Activated CD4-positive, alpha-beta memory T cell treated with anti-CD3 and anti-CD28 coated beads for 36 hours (primary cell): ENCODE measurements at regions of chr4 and their contacts with region 1.

Region 1: GRCh38 chr4:88378691-88379559 is at the start of gene HERC6:
- DNase-seq: peak; percentile 86
- H3K4me3 Mint-ChIP-seq: peak within 1 kb of the TSS; percentile 83
- H3K27ac Mint-ChIP-seq: peak within 1 kb of the TSS; percentile 85
- H3K4me1 Mint-ChIP-seq: peaks cover 49% of the 10 kb centered on the region
- H3K27me3 Mint-ChIP-seq: no peaks in the 10 kb centered on the region
- total RNA-seq, gene HERC6: 12.4 to 12.5 TPM

Region 2: DNA sequence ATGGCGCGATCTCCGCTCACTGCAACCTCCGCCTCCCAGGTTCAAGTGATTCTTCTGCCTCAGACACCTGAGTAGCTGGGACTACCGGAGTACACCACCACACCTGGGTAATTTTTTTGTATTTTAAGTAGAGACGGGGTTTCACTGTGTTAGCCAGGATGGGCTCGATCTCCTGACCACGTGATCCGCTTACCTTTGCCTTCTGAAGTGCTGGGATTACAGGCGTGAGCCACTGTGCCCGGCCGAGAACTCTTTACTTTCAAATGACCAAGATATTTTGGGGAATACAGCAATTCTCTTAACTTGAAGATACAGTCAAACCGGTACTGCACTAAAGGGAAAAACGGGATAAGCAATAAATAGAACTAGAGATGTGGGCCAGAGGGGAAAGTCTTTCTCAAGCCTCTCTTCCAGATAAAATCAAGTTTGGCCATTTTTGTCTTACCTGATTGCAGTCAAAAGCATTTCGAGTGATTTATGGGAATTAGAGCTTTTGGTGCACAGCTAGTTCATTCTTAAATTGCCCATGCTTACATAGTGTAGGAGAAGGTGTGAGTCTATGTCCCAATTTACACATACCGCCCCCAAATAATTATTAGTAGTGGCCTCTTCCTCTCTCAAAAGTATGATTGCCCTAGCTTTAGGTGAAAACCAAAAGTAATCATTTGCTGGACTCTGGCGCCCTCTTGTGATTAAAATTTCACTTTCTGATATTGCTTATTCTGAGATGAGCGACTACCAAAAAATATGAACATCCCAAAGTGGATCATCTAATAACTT is 167.3 kb before region 1 on chr4:
- CTCF ChIA-PET with region 1: no interaction called
- POLR2A ChIA-PET with region 1: no interaction called
- intact Hi-C with region 1: no loop called
- DNase-seq: peak; percentile 28
- H3K4me3 Mint-ChIP-seq: no peak overlapping the region
- H3K27ac Mint-ChIP-seq: no peak overlapping the region
- H3K4me1 Mint-ChIP-seq: no peaks in the 10 kb centered on the region
- H3K27me3 Mint-ChIP-seq: peaks cover 1% of the 10 kb centered on the region

Region 3: GRCh38 chr4:88366460-88366859 is 12.5 kb before region 1 on chr4:
- CTCF ChIA-PET with region 1: interaction called, 13 read pairs
- POLR2A ChIA-PET with region 1: no interaction called
- intact Hi-C with region 1: no loop called
- DNase-seq: no peak
- H3K4me3 Mint-ChIP-seq: no peak overlapping the region
- H3K27ac Mint-ChIP-seq: no peak overlapping the region
- H3K4me1 Mint-ChIP-seq: no peaks in the 10 kb centered on the region
- H3K27me3 Mint-ChIP-seq: no peaks in the 10 kb centered on the region

Region 4: GRCh38 chr4:88411473-88412096 is 32.7 kb after region 1 on chr4:
- CTCF ChIA-PET with region 1: interaction called, 4 read pairs
- POLR2A ChIA-PET with region 1: no interaction called
- intact Hi-C with region 1: loop called (anchors 2 kb)
- DNase-seq: peak; percentile 33
- H3K4me3 Mint-ChIP-seq: no peak overlapping the region
- H3K27ac Mint-ChIP-seq: no peak overlapping the region
- H3K4me1 Mint-ChIP-seq: peaks cover 14% of the 10 kb centered on the region
- H3K27me3 Mint-ChIP-seq: no peaks in the 10 kb centered on the region

Region 5: DNA sequence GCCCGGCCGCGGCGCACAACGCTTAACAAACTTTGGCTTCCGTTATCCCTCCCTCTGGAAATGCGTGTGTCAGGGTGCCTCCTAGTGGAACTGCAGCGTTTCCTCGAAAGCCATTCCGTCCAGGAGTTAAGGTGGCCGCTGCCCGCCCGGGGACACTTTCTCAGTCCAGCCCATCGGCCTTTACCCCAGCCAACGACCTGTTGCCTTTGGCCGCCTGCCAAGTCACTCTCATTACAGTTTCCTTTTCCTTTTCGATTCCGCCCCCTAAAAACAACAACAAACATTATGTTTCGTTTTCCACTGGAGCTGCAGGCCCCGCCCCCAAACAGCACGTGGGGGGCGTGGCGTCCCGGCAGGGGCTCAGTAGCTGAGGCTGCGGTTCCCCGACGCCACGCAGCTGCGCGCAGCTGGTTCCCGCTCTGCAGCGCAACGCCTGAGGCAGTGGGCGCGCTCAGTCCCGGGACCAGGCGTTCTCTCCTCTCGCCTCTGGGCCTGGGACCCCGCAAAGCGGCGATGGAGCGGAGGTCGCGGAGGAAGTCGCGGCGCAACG is 77.9 kb after region 1 on chr4 and contains the start of gene HERC5:
- CTCF ChIA-PET with region 1: interaction called, 21 read pairs
- POLR2A ChIA-PET with region 1: interaction called, 8 read pairs
- intact Hi-C with region 1: loop called (anchors 1 kb)
- DNase-seq: peak; percentile 94
- H3K4me3 Mint-ChIP-seq: peak within 1 kb of the TSS; percentile 100
- H3K27ac Mint-ChIP-seq: peak within 1 kb of the TSS; percentile 97
- H3K4me1 Mint-ChIP-seq: peaks cover 12% of the 10 kb centered on the region
- H3K27me3 Mint-ChIP-seq: peaks cover 3% of the 10 kb centered on the region
- total RNA-seq, gene HERC5: 32.3 to 34.0 TPM

Region 6: GRCh38 chr4:88681209-88681608 is 302.3 kb after region 1 on chr4:
- CTCF ChIA-PET with region 1: no interaction called
- POLR2A ChIA-PET with region 1: no interaction called
- intact Hi-C with region 1: no loop called
- DNase-seq: no peak
- H3K4me3 Mint-ChIP-seq: no peak overlapping the region
- H3K27ac Mint-ChIP-seq: no peak overlapping the region
- H3K4me1 Mint-ChIP-seq: no peaks in the 10 kb centered on the region
- H3K27me3 Mint-ChIP-seq: no peaks in the 10 kb centered on the region

Region 7: DNA sequence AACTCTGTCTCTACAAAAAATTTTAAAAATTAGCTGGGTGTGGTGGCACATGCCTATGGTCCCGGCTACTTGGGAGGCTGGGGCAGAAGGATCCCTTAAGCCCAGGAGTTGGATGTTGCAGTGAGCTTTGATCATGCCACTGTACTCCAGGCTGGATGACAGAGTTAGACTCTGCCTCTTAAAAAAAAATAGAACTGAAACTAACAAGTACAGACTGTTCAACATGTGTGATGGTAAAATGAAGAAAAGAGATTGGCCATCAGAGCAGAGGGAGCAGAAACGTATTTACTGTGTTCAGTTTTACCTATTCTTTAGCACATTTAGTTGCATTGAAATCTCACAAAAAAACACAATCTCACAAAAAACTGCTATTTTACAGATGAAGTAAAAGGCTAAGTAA is 396.6 kb after region 1 on chr4:
- CTCF ChIA-PET with region 1: no interaction called
- POLR2A ChIA-PET with region 1: no interaction called
- intact Hi-C with region 1: no loop called
- DNase-seq: no peak
- H3K4me3 Mint-ChIP-seq: no peak overlapping the region
- H3K27ac Mint-ChIP-seq: no peak overlapping the region
- H3K4me1 Mint-ChIP-seq: no peaks in the 10 kb centered on the region
- H3K27me3 Mint-ChIP-seq: no peaks in the 10 kb centered on the region

Region 8: GRCh38 chr4:88803600-88804096 is 424.7 kb after region 1 on chr4:
- CTCF ChIA-PET with region 1: no interaction called
- POLR2A ChIA-PET with region 1: no interaction called
- intact Hi-C with region 1: loop called (anchors 5 kb)
- DNase-seq: peak; percentile 26
- H3K4me3 Mint-ChIP-seq: no peak overlapping the region
- H3K27ac Mint-ChIP-seq: no peak overlapping the region
- H3K4me1 Mint-ChIP-seq: peaks cover 18% of the 10 kb centered on the region
- H3K27me3 Mint-ChIP-seq: peaks cover 7% of the 10 kb centered on the region

Region 9: DNA sequence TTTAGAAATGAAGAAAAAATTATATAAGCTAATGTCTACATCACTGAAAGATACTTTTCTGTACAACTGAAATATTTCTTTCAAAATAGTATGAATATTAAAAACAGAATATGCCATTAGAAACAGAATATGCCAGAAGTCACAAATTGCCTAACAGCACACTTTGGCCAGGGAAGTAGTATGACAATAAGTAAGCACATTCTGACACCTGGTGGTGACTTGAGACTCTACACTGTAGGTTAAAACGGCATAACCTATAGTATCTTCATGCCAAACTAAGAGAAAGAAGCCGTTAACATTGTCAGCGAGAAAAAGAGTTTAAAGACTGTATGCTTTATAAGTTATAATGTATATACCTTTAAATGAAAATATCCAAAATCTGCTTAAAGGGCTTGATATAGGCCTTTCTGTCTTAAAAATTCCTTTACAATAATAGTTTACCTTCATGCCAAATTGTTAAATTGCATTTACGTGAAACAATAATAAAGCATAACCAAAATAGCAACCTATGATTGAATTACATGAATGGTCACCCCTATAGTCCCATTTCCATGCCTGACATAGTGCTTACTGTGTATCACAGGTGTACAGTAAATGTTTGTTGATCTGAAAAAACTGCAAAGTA is 645.2 kb after region 1 on chr4:
- CTCF ChIA-PET with region 1: no interaction called
- POLR2A ChIA-PET with region 1: no interaction called
- intact Hi-C with region 1: loop called (anchors 10 kb)
- DNase-seq: peak; percentile 33
- H3K4me3 Mint-ChIP-seq: no peak overlapping the region
- H3K27ac Mint-ChIP-seq: no peak overlapping the region
- H3K4me1 Mint-ChIP-seq: peaks cover 5% of the 10 kb centered on the region
- H3K27me3 Mint-ChIP-seq: no peaks in the 10 kb centered on the region